Naive thymus-derived CD4-positive, alpha-beta T cell (primary cell): ENCODE measurements at regions of chr2 and their contacts with region 1.

Region 1: GRCh38 chr2:25286025-25286400 is 55.7 kb downstream of the DNMT3A start:
- DNase-seq: peak; percentile 33 to 83 (median 77)
- ATAC-seq: peak; percentile 99
- H3K4me3 ChIP-seq: peak overlapping the region; percentile 42
- H3K4me3 Mint-ChIP-seq: peak overlapping the region; percentile 72 to 90 (median 79)
- H3K27ac ChIP-seq: peak overlapping the region; percentile 75
- H3K27ac Mint-ChIP-seq: peak overlapping the region; percentile 98 to 100 (median 99)
- H3K4me1 ChIP-seq: peaks cover 31 to 54% of the 10 kb centered on the region in 2 donors
- H3K4me1 Mint-ChIP-seq: peaks cover 29 to 83% (median 62%) of the 10 kb centered on the region in 7 donors
- H3K27me3 ChIP-seq: no peaks in the 10 kb centered on the region
- H3K27me3 Mint-ChIP-seq: no peaks in the 10 kb centered on the region

Region 2: DNA sequence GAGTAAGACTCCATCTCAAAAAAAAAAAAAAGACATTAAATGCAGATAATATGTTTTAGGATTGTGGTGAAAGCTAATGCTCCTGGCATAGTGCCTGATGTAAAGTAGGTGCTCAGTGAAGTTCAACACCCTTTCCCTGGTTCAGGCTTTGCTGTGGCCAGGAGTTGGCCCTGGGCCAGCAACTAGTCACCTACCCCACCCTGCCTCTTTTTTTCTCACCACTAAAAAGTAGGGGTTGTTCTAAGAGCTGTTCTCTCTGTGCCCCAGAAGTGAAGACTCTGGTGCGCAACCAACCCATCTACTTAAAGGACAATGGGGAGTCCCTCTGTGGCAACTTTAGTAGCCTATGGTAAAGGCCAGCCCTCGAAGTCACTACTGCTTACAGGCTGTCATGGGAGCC is 20.2 kb before region 1 on chr2:
- CTCF ChIA-PET with region 1: no interaction called
- POLR2A ChIA-PET with region 1: interaction called, 10 read pairs
- intact Hi-C with region 1: no loop called
- DNase-seq: peak in 3 of 9 donors; percentile 31 to 56 (median 42)
- ATAC-seq: peak; percentile 67
- H3K4me3 ChIP-seq: no peak overlapping the region
- H3K4me3 Mint-ChIP-seq: peak overlapping the region in 7 of 10 donors; percentile 14 to 58 (median 38)
- H3K27ac ChIP-seq: peak overlapping the region; percentile 60
- H3K27ac Mint-ChIP-seq: peak overlapping the region in 7 of 9 donors; percentile 64 to 90 (median 83)
- H3K4me1 ChIP-seq: peaks cover 14 to 30% of the 10 kb centered on the region in 2 donors
- H3K4me1 Mint-ChIP-seq: peaks cover 26 to 69% (median 60%) of the 10 kb centered on the region in 7 donors
- H3K27me3 ChIP-seq: no peaks in the 10 kb centered on the region
- H3K27me3 Mint-ChIP-seq: no peaks in the 10 kb centered on the region